ENCODE measurements at regions of chr22 and their contacts with region 1.

Region 1: DNA sequence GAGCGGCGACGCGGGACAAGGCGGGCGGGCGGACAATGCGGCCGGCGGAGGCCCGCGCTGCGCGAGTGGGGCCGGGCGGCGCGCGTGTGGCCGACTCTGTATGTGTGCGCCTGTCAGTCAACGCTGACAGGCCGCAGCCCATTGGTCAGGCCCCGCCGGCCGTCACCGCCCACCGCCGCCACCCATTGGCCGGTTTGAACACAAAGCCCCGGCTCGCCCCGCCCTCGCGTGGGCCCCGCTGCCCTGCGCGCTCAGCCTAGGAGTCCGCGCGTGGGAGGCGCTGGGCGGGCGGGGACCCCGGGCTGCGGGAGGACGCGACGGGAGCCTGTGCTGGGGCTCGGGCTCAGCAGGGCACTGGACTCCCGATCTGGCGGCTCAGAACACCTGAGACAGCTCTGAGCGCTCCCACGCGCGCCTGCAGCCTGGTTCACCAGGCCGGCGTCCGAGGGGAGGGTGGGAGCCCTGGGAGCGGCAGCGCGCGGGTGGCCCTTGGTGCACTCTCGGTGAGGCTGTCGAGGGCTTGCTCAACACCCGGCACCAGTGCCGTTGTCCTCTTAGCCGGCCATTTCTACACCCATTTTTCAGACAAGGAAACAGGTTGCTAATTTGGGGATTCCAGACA is at the start of gene SUN2:
- DNase-seq: peak; percentile 95
- H3K4me3 Mint-ChIP-seq: peak within 1 kb of the TSS; percentile 88
- H3K27ac Mint-ChIP-seq: peak within 1 kb of the TSS; percentile 93
- H3K4me1 Mint-ChIP-seq: peaks cover 55% of the 10 kb centered on the region
- H3K27me3 Mint-ChIP-seq: no peaks in the 10 kb centered on the region
- total RNA-seq, gene SUN2: 159 to 168 TPM

Region 2: GRCh38 chr22:38506118-38506962 is 249.7 kb before region 1 on chr22 and contains the start of gene DDX17:
- CTCF ChIA-PET with region 1: no interaction called
- POLR2A ChIA-PET with region 1: no interaction called
- intact Hi-C with region 1: loop called (anchors 5 kb)
- DNase-seq: peak; percentile 97
- H3K4me3 Mint-ChIP-seq: peak within 1 kb of the TSS; percentile 100
- H3K27ac Mint-ChIP-seq: peak within 1 kb of the TSS; percentile 100
- H3K4me1 Mint-ChIP-seq: peaks cover 41% of the 10 kb centered on the region
- H3K27me3 Mint-ChIP-seq: no peaks in the 10 kb centered on the region
- total RNA-seq, gene DDX17: 353 to 358 TPM

Region 3: GRCh38 chr22:38733329-38733723 is 22.7 kb before region 1 on chr22:
- CTCF ChIA-PET with region 1: interaction called, 28 read pairs
- POLR2A ChIA-PET with region 1: interaction called, 17 read pairs
- intact Hi-C with region 1: loop called (anchors 2 kb)
- DNase-seq: peak; percentile 63
- H3K4me3 Mint-ChIP-seq: peak overlapping the region; percentile 29
- H3K27ac Mint-ChIP-seq: peak overlapping the region; percentile 46
- H3K4me1 Mint-ChIP-seq: peaks cover 39% of the 10 kb centered on the region
- H3K27me3 Mint-ChIP-seq: no peaks in the 10 kb centered on the region

Region 4: GRCh38 chr22:38766076-38766777 is 10.2 kb after region 1 on chr22:
- CTCF ChIA-PET with region 1: interaction called, 51 read pairs
- POLR2A ChIA-PET with region 1: interaction called, 5 read pairs
- intact Hi-C with region 1: no loop called
- DNase-seq: peak; percentile 55
- H3K4me3 Mint-ChIP-seq: no peak overlapping the region
- H3K27ac Mint-ChIP-seq: no peak overlapping the region
- H3K4me1 Mint-ChIP-seq: no peaks in the 10 kb centered on the region
- H3K27me3 Mint-ChIP-seq: no peaks in the 10 kb centered on the region

Region 5: DNA sequence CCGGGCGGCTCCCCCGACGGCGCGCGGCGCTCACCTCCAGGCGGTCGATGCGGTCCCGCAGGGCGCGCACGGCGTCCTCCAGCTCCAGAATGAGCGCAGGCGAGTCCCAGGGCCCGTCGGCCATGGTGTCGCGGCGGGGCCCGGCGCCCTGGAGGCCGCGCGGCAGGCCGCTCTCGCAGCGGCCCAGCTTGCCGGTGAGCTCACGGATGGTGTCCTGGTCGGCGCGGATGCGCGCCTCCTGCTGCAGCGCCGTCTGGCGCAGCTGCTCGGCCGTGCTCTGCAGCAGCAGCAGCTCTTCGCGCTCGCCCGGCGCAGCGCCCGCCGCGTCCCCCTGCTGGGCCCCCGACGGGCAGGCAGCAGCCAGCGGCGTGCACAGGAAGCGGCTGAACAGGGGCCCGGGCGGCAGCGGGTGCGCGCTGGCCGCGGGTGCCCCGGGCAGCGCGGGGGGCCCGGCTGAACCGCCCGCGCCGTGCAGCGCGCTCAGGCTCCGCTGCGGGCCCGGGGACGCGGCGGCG is 87.2 kb after region 1 on chr22:
- CTCF ChIA-PET with region 1: interaction called, 18 read pairs
- POLR2A ChIA-PET with region 1: interaction called, 3 read pairs
- intact Hi-C with region 1: loop called (anchors 1 kb)
- DNase-seq: peak; percentile 72
- H3K4me3 Mint-ChIP-seq: peak overlapping the region; percentile 37
- H3K27ac Mint-ChIP-seq: no peak overlapping the region
- H3K4me1 Mint-ChIP-seq: peaks cover 11% of the 10 kb centered on the region
- H3K27me3 Mint-ChIP-seq: peaks cover 15% of the 10 kb centered on the region

Region 6: DNA sequence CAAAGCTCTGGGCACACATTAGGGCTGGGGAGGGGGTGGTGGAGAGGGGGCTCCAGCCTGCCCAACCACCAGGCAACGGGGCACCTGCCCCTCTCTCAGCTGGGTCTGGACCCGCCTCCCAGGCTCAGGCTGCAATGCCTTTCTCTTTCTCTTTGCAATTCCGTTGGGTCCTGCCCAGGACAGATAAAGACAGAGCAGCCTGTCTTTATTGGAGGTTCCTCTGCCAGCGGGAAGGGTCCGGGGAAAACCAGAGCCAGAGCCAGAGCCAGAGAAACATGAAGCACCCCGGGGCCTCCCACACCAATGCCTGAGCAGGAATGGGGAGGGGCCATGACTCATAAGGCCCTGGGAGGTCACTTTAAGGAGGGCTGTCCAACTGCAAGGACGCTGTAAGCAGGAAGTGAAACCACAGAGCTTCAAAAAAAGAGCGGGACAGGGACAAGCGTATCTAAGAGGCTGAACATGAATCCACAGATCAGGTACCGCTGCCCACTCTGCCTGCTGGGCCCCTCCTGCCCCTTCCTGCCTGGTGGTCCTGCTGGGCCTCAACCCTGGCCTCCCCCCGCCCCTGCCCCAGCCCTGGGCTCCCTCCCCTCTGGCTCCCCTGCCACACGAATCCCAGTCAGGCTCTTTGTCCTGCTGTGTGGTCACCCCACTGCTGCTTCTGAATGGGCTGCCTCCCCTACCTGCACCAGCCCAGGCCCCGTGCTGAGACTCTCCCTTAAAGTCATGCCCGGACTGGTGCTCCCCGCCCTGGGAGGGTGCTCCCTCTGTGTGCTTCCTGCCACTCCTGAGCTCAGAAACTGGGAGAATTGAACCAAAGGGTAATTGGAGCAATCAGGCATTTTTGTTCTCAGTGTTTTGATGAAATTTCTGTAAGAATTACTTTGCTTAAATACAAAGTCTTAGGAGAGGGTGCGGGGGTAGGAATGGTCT is 226.2 kb after region 1 on chr22 and contains the start of gene APOBEC3B:
- CTCF ChIA-PET with region 1: no interaction called
- POLR2A ChIA-PET with region 1: no interaction called
- intact Hi-C with region 1: loop called (anchors 10 kb)
- DNase-seq: peak; percentile 90
- H3K4me3 Mint-ChIP-seq: peak within 1 kb of the TSS; percentile 64
- H3K27ac Mint-ChIP-seq: peak within 1 kb of the TSS; percentile 83
- H3K4me1 Mint-ChIP-seq: peaks cover 55% of the 10 kb centered on the region
- H3K27me3 Mint-ChIP-seq: no peaks in the 10 kb centered on the region
- total RNA-seq, gene APOBEC3B: 43.9 to 44.3 TPM

Measured in activated CD4-positive, alpha-beta memory T cell treated with anti-CD3 and anti-CD28 coated beads for 36 hours (primary cell).